ENCODE measurements at regions of chr15 and their contacts with region 1.

Region 1: GRCh38 chr15:57306161-57306943 is 70.0 kb upstream of the CGNL1 start:
- DNase-seq: peak; percentile 74
- H3K4me3 Mint-ChIP-seq: peak overlapping the region; percentile 32
- H3K27ac Mint-ChIP-seq: no peak overlapping the region
- H3K4me1 Mint-ChIP-seq: no peaks in the 10 kb centered on the region
- H3K27me3 Mint-ChIP-seq: no peaks in the 10 kb centered on the region
- CTCF ChIP-seq: peak; percentile 77

Region 2: DNA sequence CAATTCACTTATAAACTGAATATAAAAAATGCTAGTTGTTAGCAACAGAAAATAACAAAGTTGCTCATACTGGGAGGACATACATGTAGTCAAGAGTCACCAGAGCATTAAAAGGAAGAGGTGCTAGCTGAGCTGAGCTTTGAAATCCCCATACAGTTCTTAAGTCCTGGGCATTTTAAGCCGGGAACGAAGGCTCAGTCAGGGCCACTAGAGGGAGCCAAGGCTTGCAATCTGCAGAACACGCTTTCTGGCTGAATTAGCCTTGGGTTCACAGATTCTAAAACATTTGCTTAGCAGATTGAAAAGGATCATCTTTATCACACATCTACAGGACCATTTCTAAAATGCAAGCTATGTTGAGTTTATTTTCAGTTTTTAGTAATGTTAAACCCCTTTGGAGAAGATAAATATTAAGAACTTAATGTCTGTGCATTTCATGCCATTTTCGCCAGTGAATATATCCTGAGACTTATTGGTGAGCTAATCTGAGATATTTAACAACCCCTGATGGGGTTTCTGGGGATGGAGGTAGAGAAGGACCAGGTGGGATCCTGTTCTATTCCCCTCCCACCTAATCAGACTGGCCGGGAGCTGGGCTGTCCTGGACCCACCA is 815.1 kb before region 1 on chr15:
- CTCF ChIA-PET with region 1: interaction called, 12 read pairs
- POLR2A ChIA-PET with region 1: no interaction called
- intact Hi-C with region 1: loop called (anchors 1 kb)
- DNase-seq: peak; percentile 72
- H3K4me3 Mint-ChIP-seq: no peak overlapping the region
- H3K27ac Mint-ChIP-seq: no peak overlapping the region
- H3K4me1 Mint-ChIP-seq: no peaks in the 10 kb centered on the region
- H3K27me3 Mint-ChIP-seq: no peaks in the 10 kb centered on the region
- CTCF ChIP-seq: peak; percentile 79

Region 3: DNA sequence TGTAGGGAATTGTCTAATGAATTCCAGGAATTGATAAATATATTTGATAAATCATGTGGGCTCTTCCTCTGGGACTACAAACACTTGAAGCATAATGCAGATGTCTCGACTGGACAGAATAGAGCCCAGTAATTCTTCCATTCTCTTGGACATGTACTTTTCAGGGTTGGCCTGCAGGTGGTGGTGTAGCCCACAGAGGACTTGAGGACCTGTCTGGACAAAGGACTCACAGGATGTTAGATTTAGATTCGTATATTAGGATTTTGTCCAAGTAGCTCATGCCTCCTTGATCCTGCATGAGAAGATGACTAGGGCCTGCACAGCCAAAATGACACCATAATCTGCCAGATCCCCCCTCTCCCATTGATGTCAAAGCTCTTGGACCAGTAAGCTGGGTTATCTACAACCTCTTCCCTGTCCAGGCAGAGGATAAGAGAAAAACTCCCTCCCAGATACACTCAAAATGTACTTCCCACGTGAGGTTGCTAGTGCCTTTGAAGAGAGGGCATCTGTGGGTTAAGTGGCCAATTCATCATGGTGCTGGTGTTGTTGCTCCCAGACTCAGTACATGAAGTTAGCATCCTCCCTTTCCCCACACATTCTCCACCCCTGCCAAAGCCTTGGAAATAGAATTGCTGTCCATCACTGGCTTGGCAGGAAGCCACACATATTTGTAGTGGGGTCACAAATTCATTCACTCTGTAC is 484.5 kb before region 1 on chr15:
- CTCF ChIA-PET with region 1: interaction called, 8 read pairs
- POLR2A ChIA-PET with region 1: no interaction called
- intact Hi-C with region 1: loop called (anchors 1 kb)
- DNase-seq: peak; percentile 74
- H3K4me3 Mint-ChIP-seq: no peak overlapping the region
- H3K27ac Mint-ChIP-seq: no peak overlapping the region
- H3K4me1 Mint-ChIP-seq: peaks cover 14% of the 10 kb centered on the region
- H3K27me3 Mint-ChIP-seq: no peaks in the 10 kb centered on the region
- CTCF ChIP-seq: peak; percentile 72

Region 4: GRCh38 chr15:57017024-57017423 is 289.3 kb before region 1 on chr15:
- CTCF ChIA-PET with region 1: no interaction called
- POLR2A ChIA-PET with region 1: no interaction called
- intact Hi-C with region 1: loop called (anchors 5 kb)
- DNase-seq: peak; percentile 33
- H3K4me3 Mint-ChIP-seq: no peak overlapping the region
- H3K27ac Mint-ChIP-seq: no peak overlapping the region
- H3K4me1 Mint-ChIP-seq: peaks cover 36% of the 10 kb centered on the region
- H3K27me3 Mint-ChIP-seq: no peaks in the 10 kb centered on the region
- CTCF ChIP-seq: no peak

Region 5: GRCh38 chr15:57281321-57281720 is 25.0 kb before region 1 on chr15:
- CTCF ChIA-PET with region 1: interaction called, 21 read pairs
- POLR2A ChIA-PET with region 1: no interaction called
- intact Hi-C with region 1: no loop called
- DNase-seq: no peak
- H3K4me3 Mint-ChIP-seq: no peak overlapping the region
- H3K27ac Mint-ChIP-seq: no peak overlapping the region
- H3K4me1 Mint-ChIP-seq: peaks cover 5% of the 10 kb centered on the region
- H3K27me3 Mint-ChIP-seq: no peaks in the 10 kb centered on the region
- CTCF ChIP-seq: no peak

Measured in MCF 10A (cell line).